Gastrocnemius medialis (tissue), 4 donors: ENCODE measurements at regions of chr3 and their contacts with region 1.

Region 1: DNA sequence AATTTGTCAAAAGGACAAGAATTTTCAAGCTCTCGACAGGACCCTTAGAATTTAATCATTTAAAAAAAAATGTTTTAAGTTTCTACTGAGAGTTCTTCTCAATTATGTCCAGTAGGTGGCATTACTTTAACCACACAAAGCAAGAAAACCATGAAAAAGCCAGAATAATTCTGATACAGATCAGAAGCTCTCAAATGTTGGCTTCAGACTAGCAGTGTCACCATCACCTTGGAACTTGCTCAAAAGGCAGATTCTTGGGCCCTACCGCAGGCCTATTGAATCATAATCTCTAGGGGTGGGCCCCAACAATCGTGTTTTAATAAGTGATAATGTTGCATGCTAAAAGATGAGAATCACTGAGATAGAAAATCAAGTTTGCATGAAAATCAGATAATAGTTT is 99.5 kb upstream of the KCNMB2 start:
- DNase-seq: no peak
- ATAC-seq: no peak
- H3K4me3 ChIP-seq: no peak overlapping the region
- H3K27ac ChIP-seq: no peak overlapping the region
- H3K4me1 ChIP-seq: no peaks in the 10 kb centered on the region
- H3K27me3 ChIP-seq: no peaks in the 10 kb centered on the region
- CTCF ChIP-seq: peak in 3 of 5 experiments; percentile 17 to 49 (median 44)
- POLR2A ChIP-seq: no peak

Region 2: DNA sequence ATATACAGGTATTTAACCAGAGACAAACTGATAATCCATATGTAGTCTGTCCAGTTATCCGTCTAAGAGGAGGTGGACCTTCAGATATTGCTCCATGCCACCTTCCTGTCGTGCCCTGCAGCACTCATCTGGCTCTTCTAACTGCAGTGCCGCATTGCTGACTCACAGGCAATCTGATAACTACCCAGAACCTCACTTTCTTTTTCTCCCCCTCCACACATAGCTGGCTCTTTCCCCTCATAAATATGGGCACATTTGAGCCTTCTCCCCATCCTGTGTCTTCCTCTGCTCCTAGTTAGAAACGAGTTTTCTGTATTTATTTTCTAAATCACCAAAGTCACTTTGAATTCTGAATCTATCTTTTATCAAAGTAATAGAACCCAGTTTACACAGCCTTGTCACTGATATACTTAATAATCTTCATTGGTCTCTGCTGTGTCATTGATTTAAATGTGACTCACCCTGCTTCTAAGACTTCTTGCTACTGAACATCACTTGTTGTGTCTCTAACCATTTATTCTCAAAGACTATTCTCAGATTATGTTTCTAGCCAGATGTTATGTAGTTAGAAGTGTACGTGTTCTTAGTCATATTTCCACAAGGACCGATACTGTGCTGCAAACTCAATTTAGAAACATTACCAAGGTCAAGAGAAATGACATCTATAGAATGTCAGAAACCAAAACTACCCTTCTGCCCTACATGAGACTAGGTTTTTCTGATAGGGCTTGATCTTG is 82.1 kb after region 1 on chr3:
- in situ Hi-C with region 1: no loop called
- intact Hi-C with region 1: no loop called
- DNase-seq: no peak
- ATAC-seq: no peak
- H3K4me3 ChIP-seq: no peak overlapping the region
- H3K27ac ChIP-seq: no peak overlapping the region
- H3K4me1 ChIP-seq: no peaks in the 10 kb centered on the region
- H3K27me3 ChIP-seq: no peaks in the 10 kb centered on the region
- CTCF ChIP-seq: no peak
- POLR2A ChIP-seq: no peak

Region 3: DNA sequence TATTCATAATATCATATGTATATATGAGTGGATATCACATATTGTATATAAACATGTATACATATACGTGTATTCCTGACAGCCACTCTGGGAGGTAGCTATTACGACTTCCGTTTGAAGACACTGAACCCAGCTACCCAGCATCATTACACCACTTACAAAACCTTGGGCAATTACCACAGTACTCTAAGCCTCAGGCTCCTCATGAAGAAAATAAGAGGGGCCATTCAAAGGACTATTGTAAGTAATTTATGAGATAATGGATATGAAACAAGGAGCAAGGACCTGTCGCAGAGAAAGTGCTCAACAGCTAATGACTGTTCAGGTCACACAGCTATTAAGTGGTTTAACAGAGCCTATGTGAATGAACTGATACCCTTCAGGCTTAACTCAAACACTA is 151.9 kb after region 1 on chr3:
- in situ Hi-C with region 1: no loop called
- intact Hi-C with region 1: no loop called
- DNase-seq: no peak
- ATAC-seq: no peak
- H3K4me3 ChIP-seq: no peak overlapping the region
- H3K27ac ChIP-seq: no peak overlapping the region
- H3K4me1 ChIP-seq: peaks cover 4 to 6% of the 10 kb centered on the region in 2 donors
- H3K27me3 ChIP-seq: no peaks in the 10 kb centered on the region
- CTCF ChIP-seq: no peak
- POLR2A ChIP-seq: no peak

Region 4: GRCh38 chr3:178966299-178967176 is 529.8 kb after region 1 on chr3:
- in situ Hi-C with region 1: loop called in 3 of 4 experiments (anchors 25 kb)
- intact Hi-C with region 1: loop called (anchors 2 kb)
- DNase-seq: no peak
- ATAC-seq: peak in 1 of 2 donors; percentile 72
- H3K4me3 ChIP-seq: peak overlapping the region in 3 of 4 donors; percentile 7 to 19 (median 18)
- H3K27ac ChIP-seq: peak overlapping the region in 2 of 4 donors; percentile 8 to 22
- H3K4me1 ChIP-seq: peaks cover 6 to 10% of the 10 kb centered on the region in 2 donors
- H3K27me3 ChIP-seq: no peaks in the 10 kb centered on the region
- CTCF ChIP-seq: peak in 3 of 5 experiments; percentile 29 to 42 (median 34)
- POLR2A ChIP-seq: no peak